OCI-LY7 (cell line): ENCODE measurements at regions of chr17 and their contacts with region 1.

Region 1: DNA sequence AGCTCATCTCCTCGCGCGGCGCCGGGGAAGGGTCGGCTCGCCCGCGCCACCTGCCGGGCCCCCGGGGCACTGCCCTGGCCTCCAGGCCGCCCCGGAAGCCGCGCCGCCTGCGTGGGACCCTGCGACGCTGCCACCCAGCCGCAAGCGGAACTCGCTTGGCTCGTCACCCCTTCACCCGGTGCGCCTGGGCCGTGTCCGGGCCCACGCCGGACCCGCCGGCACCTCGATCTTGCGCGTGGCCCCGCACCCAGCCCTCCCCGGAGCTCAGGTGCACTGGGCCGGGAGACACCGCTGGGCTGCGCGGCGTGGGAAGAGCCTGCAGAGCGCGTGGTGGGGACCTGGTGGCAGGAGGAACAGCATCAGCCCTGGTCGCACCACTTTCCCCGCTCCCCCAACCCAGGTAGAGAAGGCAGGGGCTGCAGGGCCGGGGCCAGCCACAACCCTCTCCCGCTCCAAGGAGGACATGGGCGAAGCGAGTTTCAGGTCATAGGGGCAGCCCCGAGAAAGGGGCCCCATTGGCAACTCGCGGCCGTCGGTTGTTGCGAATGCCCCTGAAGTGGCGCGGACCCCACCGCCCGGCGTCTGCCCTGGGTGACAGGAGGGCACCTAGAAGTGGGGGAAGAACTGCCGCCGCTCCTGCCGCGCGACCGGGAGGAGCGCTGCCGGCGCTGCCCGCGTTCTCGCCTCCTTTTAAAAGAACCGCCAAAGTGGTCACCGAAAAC is 363 bp upstream of the MIF4GD start:
- DNase-seq: peak; percentile 97
- H3K4me3 ChIP-seq: peak overlapping the region; percentile 90
- H3K27ac ChIP-seq: peak overlapping the region; percentile 77
- H3K4me1 ChIP-seq: peaks cover 42% of the 10 kb centered on the region
- CTCF ChIP-seq: peak; percentile 69

Region 2: DNA sequence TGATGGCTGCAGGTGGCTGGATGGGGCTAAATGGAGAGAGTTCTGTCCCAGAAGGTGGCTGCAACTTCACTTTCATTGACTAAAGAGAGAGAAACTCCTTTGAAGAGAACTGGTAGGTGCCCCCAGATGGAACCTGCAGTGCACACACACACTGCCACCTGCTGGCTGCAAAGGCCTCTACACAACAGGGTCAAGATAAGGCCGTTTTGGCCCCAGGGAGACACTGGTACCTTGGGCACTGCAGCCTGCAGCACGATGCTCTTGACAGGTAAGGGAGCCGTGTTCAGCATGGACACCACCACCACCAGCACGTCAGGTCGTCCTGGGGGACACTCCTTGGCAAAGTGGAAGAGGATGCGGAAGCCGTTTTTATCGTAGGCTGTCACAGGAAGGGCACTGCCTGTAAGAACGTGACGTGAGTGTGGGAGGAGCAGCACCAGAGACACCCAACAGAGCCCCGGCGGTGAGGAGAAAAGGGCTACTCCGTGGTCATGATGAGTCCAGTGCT is 32.7 kb before region 1 on chr17:
- CTCF ChIA-PET with region 1: interaction called, 6 read pairs
- POLR2A ChIA-PET with region 1: no interaction called
- intact Hi-C with region 1: loop called (anchors 1 kb)
- DNase-seq: peak; percentile 89
- H3K4me3 ChIP-seq: no peak overlapping the region
- H3K27ac ChIP-seq: peak overlapping the region; percentile 15
- H3K4me1 ChIP-seq: peaks cover 27% of the 10 kb centered on the region
- CTCF ChIP-seq: peak; percentile 99

Region 3: DNA sequence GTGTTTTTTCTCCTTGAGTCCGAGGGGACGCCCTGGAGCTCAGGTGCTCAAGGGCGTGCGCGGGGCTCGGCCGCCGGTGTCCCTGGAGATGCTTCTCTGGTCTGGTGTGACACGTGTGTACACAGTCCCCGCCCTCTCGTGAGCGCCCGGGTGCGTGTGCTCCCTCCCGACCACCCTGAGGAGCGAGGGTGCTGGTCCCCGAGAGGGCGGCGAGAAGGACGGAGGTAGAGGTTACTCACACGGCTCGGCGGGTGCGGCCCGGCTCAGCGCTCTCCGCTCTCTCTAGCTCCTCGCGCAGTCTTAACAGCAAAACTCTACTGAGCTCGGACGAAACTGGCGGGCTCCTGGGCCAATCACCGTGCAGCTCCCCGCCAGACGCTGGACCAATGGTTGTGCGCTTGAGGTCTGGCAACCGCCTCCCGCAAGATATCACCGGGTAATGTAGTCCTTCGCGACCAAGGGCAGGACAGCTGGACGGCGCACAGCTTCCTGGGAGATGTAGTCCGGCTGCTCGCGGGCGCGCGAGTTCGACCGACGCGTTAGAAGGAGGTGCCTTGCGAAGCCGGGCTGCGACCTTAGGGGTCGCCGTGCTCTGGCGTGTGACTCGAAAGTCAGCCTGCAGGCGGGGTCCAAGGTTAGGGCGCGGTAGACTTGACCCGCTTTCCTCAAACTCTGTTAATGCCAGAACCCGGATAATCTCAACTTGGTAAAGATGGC is 17.9 kb after region 1 on chr17 and contains the start of gene SLC25A19:
- CTCF ChIA-PET with region 1: interaction called, 10 read pairs
- POLR2A ChIA-PET with region 1: interaction called, 22 read pairs
- intact Hi-C with region 1: loop called (anchors 1 kb)
- DNase-seq: peak; percentile 100
- H3K4me3 ChIP-seq: peak within 1 kb of the TSS; percentile 86
- H3K27ac ChIP-seq: peak within 1 kb of the TSS; percentile 80
- H3K4me1 ChIP-seq: peaks cover 52% of the 10 kb centered on the region
- CTCF ChIP-seq: peak; percentile 69
- total RNA-seq, gene SLC25A19: 113 TPM in 2 replicates

Region 4: DNA sequence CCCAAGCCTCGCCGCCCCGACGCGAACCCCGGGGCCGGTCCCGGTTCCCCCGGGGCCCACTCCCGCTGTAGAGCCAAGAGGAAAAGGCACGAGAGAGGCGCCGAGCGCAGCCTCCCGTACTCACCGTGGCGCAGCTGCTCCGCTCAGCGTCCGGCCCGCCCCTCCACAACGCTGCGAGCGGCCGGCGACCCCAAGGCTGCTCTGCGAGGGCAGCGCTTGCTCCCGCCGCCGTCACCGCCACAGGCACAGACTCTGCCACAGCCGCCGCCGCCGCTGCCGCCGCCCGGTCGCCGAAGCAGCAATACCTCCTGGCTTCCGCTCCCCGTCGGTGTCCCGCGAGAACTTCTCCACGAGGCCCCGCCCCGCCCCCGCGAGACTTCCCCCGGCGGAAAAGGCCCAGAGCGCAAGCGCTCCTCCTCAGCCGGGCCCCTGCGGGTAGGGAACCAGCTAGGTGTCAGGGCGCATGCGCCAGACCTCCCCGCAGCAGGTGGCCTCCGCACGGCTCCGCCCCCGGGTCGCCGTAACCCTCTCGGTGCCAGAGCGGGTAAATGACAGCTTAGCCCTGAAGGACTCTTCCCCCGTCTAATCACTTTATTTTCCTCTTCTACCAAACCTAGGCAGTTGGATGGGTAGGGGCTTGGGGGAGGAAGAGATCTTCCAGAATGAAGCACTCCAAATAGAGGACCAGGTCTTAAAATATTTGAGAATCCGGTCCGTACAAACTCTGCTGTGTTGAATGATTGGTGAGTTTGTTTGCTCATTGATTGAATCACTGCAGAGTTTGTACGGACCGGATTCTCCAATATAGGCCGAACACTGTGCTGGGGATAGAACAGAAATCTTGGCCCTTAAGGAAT is 134.2 kb after region 1 on chr17 and contains the start of gene GRB2:
- CTCF ChIA-PET with region 1: interaction called, 3 read pairs
- POLR2A ChIA-PET with region 1: interaction called, 6 read pairs
- intact Hi-C with region 1: loop called (anchors 2 kb)
- DNase-seq: peak; percentile 100
- H3K4me3 ChIP-seq: peak within 1 kb of the TSS; percentile 84
- H3K27ac ChIP-seq: peak within 1 kb of the TSS; percentile 81
- H3K4me1 ChIP-seq: peaks cover 62% of the 10 kb centered on the region
- CTCF ChIP-seq: no peak
- total RNA-seq, gene GRB2: 240 and 244 TPM in 2 replicates

Region 5: GRCh38 chr17:75524953-75525719 is 253.7 kb after region 1 on chr17 and contains the start of gene LLGL2:
- CTCF ChIA-PET with region 1: interaction called, 3 read pairs
- POLR2A ChIA-PET with region 1: no interaction called
- intact Hi-C with region 1: loop called (anchors 2 kb)
- DNase-seq: peak; percentile 94
- H3K4me3 ChIP-seq: peak within 1 kb of the TSS; percentile 72
- H3K27ac ChIP-seq: peak within 1 kb of the TSS; percentile 12
- H3K4me1 ChIP-seq: peaks cover 19% of the 10 kb centered on the region
- CTCF ChIP-seq: peak; percentile 75
- total RNA-seq, gene LLGL2: 10.7 and 12.6 TPM in 2 replicates